ENCODE measurements at regions of chr19 and their contacts with region 1.

Region 1: GRCh38 chr19:8569066-8569771 is 8.0 kb downstream of the MYO1F start:
- DNase-seq: peak; percentile 63 to 95
- H3K4me3 ChIP-seq: no peak overlapping the region
- H3K27ac ChIP-seq: 0 out of 2 replicates have a peak overlapping the region, but pooled peaks have one; percentile 18
- H3K4me1 ChIP-seq: peaks cover 46% of the 10 kb centered on the region
- H3K27me3 ChIP-seq: no peaks in the 10 kb centered on the region
- CTCF ChIP-seq: no peak; the same call in 1 of the 2 replicates

Region 2: DNA sequence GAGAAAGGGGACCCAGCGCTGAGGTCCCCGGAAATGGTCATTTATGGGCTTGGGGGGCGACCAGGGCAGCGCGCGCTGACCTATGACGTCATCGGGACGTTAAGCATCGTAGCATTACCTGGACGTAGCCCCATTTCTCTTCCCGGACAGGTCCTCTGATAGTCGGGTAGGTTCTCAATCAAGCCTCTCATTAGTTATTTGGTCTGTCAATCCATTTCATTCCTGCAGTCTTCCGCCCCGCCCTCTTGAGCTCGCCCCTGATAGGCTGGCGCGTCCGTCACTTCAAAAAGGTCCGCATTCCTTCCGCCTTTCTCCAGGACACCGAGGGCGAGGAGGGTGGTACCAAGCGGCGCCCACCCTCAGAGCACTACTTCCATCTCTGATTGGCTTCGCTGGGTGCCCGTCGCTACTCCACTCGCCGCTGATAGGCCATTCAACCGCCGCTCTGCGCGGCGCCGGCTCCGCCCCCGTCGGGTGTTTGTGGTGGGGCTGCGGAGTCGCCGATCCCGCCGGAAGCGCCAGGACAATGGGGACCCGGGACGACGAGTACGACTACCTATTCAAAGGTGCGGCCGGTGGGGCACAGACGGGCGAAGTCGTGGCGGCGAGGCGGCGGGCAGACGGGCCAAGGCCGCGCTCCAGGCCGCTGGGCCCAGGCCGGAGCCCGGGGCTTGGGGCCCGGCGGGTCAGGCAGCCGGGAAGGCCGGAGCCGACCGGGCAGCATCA is 179.2 kb before region 1 on chr19 and contains the start of gene RAB11B:
- CTCF ChIA-PET with region 1: interaction called, 4 read pairs
- POLR2A ChIA-PET with region 1: interaction called, 21 read pairs
- intact Hi-C with region 1: no loop called
- DNase-seq: peak; percentile 99 to 100
- H3K4me3 ChIP-seq: peak within 1 kb of the TSS; percentile 82
- H3K27ac ChIP-seq: peak within 1 kb of the TSS; percentile 85
- H3K4me1 ChIP-seq: peaks cover 56% of the 10 kb centered on the region
- H3K27me3 ChIP-seq: no peaks in the 10 kb centered on the region
- CTCF ChIP-seq: no peak
- total RNA-seq, gene RAB11B: 119 and 126 TPM in 2 replicates

Region 3: GRCh38 chr19:8513687-8514504 is 55.3 kb before region 1 on chr19 and contains the start of gene ZNF414:
- CTCF ChIA-PET with region 1: no interaction called
- POLR2A ChIA-PET with region 1: interaction called, 13 read pairs
- intact Hi-C with region 1: no loop called
- DNase-seq: peak; percentile 93 to 95
- H3K4me3 ChIP-seq: peak within 1 kb of the TSS; percentile 80
- H3K27ac ChIP-seq: peak within 1 kb of the TSS; percentile 76
- H3K4me1 ChIP-seq: peaks cover 14% of the 10 kb centered on the region
- H3K27me3 ChIP-seq: no peaks in the 10 kb centered on the region
- CTCF ChIP-seq: no peak
- total RNA-seq, gene ZNF414: 22.1 and 22.4 TPM in 2 replicates

Measured in PC-9 (cell line).